ENCODE measurements at regions of chr4 and their contacts with region 1.

Region 1: DNA sequence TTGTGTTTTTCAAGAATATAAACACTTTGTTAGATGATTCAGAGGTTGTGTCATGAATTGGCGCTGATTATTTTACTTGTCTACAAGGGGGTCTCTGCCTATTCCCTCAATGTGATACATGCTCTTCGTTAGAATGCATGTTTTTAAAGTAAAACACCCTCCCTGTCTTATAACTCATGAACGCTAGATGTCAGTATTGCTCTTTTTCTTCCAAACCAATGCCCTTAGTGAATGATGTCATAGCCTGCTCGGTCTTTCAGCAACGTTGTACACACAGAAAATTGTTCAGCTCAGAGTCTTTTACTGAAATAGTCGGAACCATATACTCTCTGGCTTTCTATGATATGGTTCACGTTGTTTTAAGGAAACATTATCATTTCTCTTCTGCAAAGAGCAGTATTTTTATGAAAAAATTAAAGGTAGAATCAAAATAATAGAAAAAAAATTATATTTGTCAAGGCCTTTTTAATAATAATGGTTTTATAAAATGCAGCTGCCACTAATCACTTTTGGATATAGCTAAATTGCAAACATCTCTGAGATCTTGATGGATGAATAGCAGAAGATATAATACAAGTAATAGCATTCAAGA is 292.9 kb downstream of the TLL1 start:
- DNase-seq: peak; percentile 77
- H3K4me3 ChIP-seq: no peak overlapping the region
- H3K27ac ChIP-seq: no peak overlapping the region
- H3K4me1 ChIP-seq: no peaks in the 10 kb centered on the region
- H3K27me3 ChIP-seq: peaks cover 0 to 4% of the 10 kb centered on the region in 2 experiments
- CTCF ChIP-seq: peak; percentile 56 to 64
- POLR2A ChIP-seq: no peak

Region 2: GRCh38 chr4:165893311-165893710 is 272.6 kb before region 1 on chr4:
- CTCF ChIA-PET with region 1: no interaction called
- POLR2A ChIA-PET with region 1: no interaction called
- dilution Hi-C with region 1: no loop called
- intact Hi-C with region 1: no loop called
- DNase-seq: no peak
- H3K4me3 ChIP-seq: no peak overlapping the region
- H3K27ac ChIP-seq: no peak overlapping the region
- H3K4me1 ChIP-seq: no peaks in the 10 kb centered on the region
- H3K27me3 ChIP-seq: no peaks in the 10 kb centered on the region
- CTCF ChIP-seq: no peak
- POLR2A ChIP-seq: no peak

Region 3: DNA sequence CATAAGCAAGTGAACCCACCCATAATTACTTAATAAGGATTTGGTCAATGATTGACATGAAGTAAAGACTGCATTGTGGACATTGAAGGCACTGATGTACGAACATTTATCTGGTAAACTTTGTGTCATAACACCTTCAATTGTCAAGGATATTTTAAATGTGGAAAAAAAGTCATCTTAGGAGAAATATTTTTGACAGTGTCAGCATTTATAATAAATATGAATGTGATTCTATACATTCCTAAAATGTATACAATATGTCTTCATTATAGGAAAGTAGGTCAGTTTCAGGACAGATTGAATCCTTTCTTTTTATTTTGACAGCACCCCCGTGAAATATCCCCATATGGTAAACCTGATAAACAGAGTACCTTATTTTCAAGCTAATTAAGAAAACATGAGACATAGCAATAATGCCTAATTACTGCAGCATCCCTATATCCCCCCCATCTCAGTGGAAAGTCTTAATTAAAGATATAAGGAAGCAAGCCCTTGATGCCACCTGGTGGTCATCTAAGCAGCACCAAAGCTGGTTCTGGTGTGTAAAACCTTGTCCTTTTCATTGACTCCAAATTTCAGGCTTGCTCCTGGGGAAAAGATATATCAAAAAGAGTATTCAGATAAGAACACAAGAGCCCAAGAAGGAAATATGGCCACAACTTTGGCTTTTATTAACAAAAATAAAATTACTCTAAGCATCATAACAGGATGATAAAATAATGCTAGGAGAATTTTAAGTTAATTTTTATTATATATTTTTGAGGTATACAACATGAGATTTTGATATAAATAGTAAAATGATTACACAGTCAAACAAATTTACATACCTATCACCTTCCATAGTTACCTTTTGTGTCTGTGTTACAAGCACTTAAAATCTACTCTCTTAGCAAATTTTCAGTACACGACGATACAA is 86.8 kb after region 1 on chr4:
- CTCF ChIA-PET with region 1: interaction called, 77 read pairs
- POLR2A ChIA-PET with region 1: no interaction called
- dilution Hi-C with region 1: no loop called
- intact Hi-C with region 1: loop called (anchors 1 kb)
- DNase-seq: peak; percentile 34
- H3K4me3 ChIP-seq: no peak overlapping the region
- H3K27ac ChIP-seq: no peak overlapping the region
- H3K4me1 ChIP-seq: no peaks in the 10 kb centered on the region
- H3K27me3 ChIP-seq: no peaks in the 10 kb centered on the region
- CTCF ChIP-seq: peak; percentile 54
- POLR2A ChIP-seq: no peak

Region 4: DNA sequence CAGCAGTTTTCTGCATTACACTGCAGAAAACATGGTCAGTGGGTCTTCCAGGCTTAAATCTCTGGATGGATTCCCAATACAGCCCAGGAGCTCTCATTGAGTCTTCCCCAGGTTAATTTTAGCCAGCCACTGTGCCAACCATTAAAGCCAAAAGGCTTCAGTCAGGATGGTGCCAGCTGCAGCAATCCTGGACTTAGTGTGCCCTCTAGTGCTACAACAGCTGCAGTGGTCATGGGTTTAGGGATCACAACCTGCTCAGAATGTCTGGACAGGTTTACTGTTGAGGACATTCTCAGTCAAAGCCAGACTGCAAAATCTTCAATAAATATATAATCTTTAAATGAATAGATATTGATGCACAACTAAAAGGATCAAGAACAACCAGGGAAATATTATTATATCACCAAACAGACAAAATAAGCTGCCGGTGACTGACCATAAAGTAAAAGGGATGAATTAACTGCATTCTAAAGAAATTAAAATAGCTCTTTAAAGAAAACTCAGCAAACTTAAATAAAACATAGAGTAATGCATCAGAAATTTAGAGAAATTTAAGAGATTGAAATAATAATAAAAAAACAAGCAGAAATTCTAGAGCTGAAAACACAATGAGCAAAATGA is 428.5 kb after region 1 on chr4:
- CTCF ChIA-PET with region 1: interaction called, 49 read pairs
- POLR2A ChIA-PET with region 1: no interaction called
- dilution Hi-C with region 1: no loop called
- intact Hi-C with region 1: loop called (anchors 1 kb)
- DNase-seq: no peak
- H3K4me3 ChIP-seq: no peak overlapping the region
- H3K27ac ChIP-seq: no peak overlapping the region
- H3K4me1 ChIP-seq: no peaks in the 10 kb centered on the region
- H3K27me3 ChIP-seq: no peaks in the 10 kb centered on the region
- CTCF ChIP-seq: no peak
- POLR2A ChIP-seq: no peak

Region 5: GRCh38 chr4:167290678-167291077 is 1124.8 kb after region 1 on chr4:
- CTCF ChIA-PET with region 1: interaction called, 11 read pairs
- POLR2A ChIA-PET with region 1: no interaction called
- dilution Hi-C with region 1: no loop called
- intact Hi-C with region 1: no loop called
- DNase-seq: peak; percentile 11
- H3K4me3 ChIP-seq: no peak overlapping the region
- H3K27ac ChIP-seq: no peak overlapping the region
- H3K4me1 ChIP-seq: no peaks in the 10 kb centered on the region
- H3K27me3 ChIP-seq: no peaks in the 10 kb centered on the region
- CTCF ChIP-seq: peak; percentile 12 to 18
- POLR2A ChIP-seq: no peak

Region 6: DNA sequence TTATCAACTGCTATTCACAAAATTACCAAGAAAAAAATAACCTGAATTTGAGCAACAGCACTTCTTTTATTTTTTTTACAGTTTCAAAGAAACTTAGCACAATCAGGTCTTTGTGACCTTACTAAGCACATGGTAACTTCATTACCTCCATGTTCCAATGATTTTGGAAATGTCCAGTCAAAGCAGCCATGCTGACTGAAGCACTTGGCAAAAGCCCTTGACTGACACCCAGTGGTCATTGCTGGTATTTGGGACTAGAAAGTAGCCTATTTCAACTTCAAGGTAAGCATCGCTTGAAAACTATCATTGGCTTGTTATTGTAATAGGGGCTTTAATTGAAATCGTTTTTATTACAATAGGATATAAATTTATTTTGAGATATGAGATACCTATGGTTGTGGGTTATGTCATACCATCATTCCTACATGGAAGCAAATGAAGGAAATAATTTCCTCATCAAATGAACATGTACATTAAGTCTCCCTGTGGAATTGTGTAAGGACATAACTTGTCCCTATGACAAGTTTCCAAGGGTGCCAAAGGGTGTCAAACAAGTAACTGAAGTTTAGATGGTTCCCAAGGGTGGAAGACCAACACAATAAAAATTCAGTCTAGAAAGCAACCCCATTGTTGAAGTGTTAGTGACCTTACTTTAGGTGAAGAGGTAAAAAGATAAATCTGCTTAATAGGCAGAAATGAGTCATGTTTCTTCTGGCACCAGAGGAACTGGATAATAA is 1911.2 kb after region 1 on chr4:
- CTCF ChIA-PET with region 1: interaction called, 3 read pairs
- POLR2A ChIA-PET with region 1: no interaction called
- dilution Hi-C with region 1: no loop called
- intact Hi-C with region 1: loop called (anchors 5 kb)
- DNase-seq: peak; percentile 81
- H3K4me3 ChIP-seq: no peak overlapping the region
- H3K27ac ChIP-seq: no peak overlapping the region
- H3K4me1 ChIP-seq: peaks cover 8% of the 10 kb centered on the region
- H3K27me3 ChIP-seq: no peaks in the 10 kb centered on the region
- CTCF ChIP-seq: peak; percentile 73 to 75
- POLR2A ChIP-seq: no peak